Dendritic cell treated with granulocyte-macrophage colony-stimulating factor and Interleukin-4, amounts not matched to agents 40 ng/mL and 50 ng/mL, for 4 days (primary cell): ENCODE measurements at regions of chr2 and their contacts with region 1.

Region 1: DNA sequence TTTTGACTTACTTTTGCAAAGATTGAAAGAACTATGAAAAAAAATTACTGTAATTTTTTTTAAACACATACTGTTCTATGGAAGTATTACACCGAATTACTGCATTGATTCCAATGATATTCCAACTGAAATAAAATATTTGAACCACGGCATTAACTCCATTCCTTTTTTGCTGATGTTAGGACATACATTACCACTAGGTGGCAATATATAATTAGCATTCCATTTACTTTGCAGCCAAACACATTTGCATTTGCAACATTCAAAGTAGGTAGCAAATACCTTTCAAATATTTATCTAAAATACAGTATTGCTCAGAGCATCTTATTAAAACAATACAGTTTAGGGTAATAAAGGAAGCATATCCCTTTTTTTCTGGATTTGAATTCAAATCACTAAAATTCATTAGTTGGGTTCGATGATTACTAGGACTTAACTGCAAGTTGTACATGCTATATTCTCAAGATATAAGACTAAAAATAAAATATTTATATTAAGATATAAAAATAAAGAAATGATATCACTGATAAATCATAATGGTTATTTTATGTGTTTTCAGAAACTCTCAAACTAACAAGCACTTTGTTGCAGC is 31.3 kb downstream of the LANCL1 start:
- H3K4me3 Mint-ChIP-seq: no peak overlapping the region
- H3K27ac Mint-ChIP-seq: no peak overlapping the region
- H3K4me1 Mint-ChIP-seq: peaks cover 21% of the 10 kb centered on the region
- H3K27me3 Mint-ChIP-seq: no peaks in the 10 kb centered on the region

Region 2: GRCh38 chr2:210481601-210482175 is 36.5 kb after region 1 on chr2:
- intact Hi-C with region 1: no loop called
- H3K4me3 Mint-ChIP-seq: no peak overlapping the region
- H3K27ac Mint-ChIP-seq: no peak overlapping the region
- H3K4me1 Mint-ChIP-seq: peaks cover 9% of the 10 kb centered on the region
- H3K27me3 Mint-ChIP-seq: no peaks in the 10 kb centered on the region

Region 3: DNA sequence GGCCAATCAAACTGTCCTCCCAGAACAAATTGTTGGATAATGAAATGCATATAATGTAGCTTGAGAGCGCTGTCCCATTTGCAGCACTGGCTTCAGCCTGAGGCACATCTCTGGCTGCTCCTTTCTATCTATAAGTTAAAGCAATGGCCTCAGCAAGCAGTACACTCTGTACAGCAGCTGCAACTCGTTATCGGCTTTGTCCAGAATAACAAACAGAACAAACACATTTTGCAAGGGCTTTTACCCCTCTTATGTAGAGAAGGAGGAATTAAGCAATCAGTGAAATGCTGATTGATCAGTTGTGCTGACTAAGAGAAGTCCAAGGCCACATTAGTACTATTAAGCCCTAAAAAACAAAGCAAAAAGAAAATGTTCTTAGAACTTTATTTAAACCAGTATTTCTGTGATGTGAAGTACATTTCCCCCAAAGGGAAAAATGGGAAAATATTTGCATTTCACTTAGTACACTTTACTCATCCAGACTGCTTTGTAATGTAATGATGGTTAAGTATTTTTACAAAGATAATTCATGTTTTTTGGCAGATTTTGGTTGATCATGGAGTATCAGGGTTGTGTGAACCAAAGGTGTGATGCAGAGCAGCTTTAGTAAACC is 96.2 kb after region 1 on chr2:
- intact Hi-C with region 1: no loop called
- H3K4me3 Mint-ChIP-seq: no peak overlapping the region
- H3K27ac Mint-ChIP-seq: no peak overlapping the region
- H3K4me1 Mint-ChIP-seq: no peaks in the 10 kb centered on the region
- H3K27me3 Mint-ChIP-seq: no peaks in the 10 kb centered on the region

Region 4: DNA sequence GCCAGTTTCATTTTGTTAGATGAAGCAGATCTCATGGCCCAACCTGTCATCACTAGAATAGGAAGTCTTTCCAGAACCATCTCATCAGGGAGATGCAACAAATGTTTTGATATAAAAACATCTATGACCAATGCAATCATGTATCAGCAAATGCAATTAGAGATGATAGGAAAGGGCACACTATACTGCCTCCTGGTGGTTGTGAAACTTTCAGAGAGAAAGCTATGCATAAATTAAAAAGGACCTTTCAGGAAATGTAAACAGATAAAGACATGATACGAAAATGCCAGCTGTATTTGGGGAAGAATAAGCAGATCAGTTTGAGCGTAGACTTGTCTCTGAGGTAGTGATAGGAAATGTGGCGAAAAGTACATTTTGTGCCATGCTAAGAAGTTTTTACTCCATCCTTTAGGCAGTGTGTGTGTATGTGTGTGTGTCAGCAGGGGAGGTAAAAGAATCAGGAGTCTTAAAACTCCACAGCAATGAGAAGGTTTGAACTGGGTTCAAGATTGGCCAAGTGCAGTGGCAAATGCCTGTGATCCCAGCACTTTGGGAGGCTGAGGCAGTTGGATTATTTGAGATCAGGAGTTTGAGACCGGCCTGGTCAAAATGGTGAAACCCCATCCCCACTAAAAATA is 590.5 kb after region 1 on chr2:
- intact Hi-C with region 1: loop called (anchors 10 kb)
- H3K4me3 Mint-ChIP-seq: no peak overlapping the region
- H3K27ac Mint-ChIP-seq: no peak overlapping the region
- H3K4me1 Mint-ChIP-seq: no peaks in the 10 kb centered on the region
- H3K27me3 Mint-ChIP-seq: no peaks in the 10 kb centered on the region

Region 5: GRCh38 chr2:211157856-211158463 is 712.7 kb after region 1 on chr2:
- intact Hi-C with region 1: loop called (anchors 5 kb)
- H3K4me3 Mint-ChIP-seq: no peak overlapping the region
- H3K27ac Mint-ChIP-seq: no peak overlapping the region
- H3K4me1 Mint-ChIP-seq: no peaks in the 10 kb centered on the region
- H3K27me3 Mint-ChIP-seq: no peaks in the 10 kb centered on the region